Panc1 (cell line): ENCODE measurements at regions of chr7 and their contacts with region 1.

Region 1: DNA sequence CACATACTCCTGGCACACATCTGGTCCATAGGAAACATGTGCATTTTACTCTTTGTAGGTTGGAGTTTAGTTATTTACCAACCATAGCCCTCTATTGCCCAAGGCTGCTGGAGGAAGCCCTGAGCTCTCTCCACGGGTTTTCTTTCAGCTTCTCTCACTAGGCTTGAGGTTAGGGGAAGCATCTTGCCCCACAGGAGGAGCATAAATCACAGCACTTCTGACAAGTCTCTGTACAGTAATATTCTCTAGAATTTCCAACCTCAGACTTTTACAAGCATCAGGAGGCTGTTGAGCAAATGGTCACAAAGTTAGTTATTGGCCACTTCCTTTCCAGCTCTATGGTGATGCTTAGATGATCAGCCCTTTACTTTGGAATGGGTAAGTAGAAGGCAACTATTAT is 122.9 kb upstream of the GLI3 start:
- DNase-seq: no peak
- ATAC-seq: no peak
- H3K4me3 ChIP-seq: no peak overlapping the region
- H3K27ac ChIP-seq: no peak overlapping the region
- H3K4me1 ChIP-seq: no peaks in the 10 kb centered on the region
- H3K27me3 ChIP-seq: no peaks in the 10 kb centered on the region
- CTCF ChIP-seq: no peak

Region 2: GRCh38 chr7:42247301-42247700 is 112.6 kb before region 1 on chr7:
- CTCF ChIA-PET with region 1: no interaction called
- POLR2A ChIA-PET with region 1: no interaction called
- in situ Hi-C with region 1: no loop called
- intact Hi-C with region 1: no loop called
- DNase-seq: no peak
- ATAC-seq: no peak
- H3K4me3 ChIP-seq: no peak overlapping the region
- H3K27ac ChIP-seq: no peak overlapping the region
- H3K4me1 ChIP-seq: no peaks in the 10 kb centered on the region
- H3K27me3 ChIP-seq: no peaks in the 10 kb centered on the region
- CTCF ChIP-seq: no peak

Region 3: DNA sequence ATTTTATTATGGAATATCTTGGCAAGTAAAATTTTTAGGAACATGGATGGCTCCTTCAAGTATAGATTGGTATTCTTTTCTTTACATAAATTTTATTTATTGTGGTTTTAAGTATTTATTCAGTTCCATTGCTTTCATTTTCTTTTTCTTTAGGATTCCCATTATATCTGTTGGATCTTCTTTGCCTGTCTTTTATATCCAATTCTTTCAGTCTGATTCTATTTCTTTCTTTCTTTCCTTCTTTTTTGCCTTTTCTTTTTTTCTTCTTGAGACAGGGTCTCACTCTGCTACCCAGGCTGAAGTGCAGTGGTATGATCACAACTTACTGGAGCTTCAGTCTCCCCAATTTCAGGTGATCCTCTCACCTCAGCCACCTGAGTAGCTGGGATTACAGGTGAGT is 48.8 kb before region 1 on chr7:
- CTCF ChIA-PET with region 1: no interaction called
- POLR2A ChIA-PET with region 1: no interaction called
- in situ Hi-C with region 1: no loop called
- intact Hi-C with region 1: loop called (anchors 1 kb)
- DNase-seq: no peak
- ATAC-seq: no peak
- H3K4me3 ChIP-seq: no peak overlapping the region
- H3K27ac ChIP-seq: no peak overlapping the region
- H3K4me1 ChIP-seq: no peaks in the 10 kb centered on the region
- H3K27me3 ChIP-seq: no peaks in the 10 kb centered on the region
- CTCF ChIP-seq: no peak